ENCODE measurements at regions of chr3 and their contacts with region 1.

Region 1: DNA sequence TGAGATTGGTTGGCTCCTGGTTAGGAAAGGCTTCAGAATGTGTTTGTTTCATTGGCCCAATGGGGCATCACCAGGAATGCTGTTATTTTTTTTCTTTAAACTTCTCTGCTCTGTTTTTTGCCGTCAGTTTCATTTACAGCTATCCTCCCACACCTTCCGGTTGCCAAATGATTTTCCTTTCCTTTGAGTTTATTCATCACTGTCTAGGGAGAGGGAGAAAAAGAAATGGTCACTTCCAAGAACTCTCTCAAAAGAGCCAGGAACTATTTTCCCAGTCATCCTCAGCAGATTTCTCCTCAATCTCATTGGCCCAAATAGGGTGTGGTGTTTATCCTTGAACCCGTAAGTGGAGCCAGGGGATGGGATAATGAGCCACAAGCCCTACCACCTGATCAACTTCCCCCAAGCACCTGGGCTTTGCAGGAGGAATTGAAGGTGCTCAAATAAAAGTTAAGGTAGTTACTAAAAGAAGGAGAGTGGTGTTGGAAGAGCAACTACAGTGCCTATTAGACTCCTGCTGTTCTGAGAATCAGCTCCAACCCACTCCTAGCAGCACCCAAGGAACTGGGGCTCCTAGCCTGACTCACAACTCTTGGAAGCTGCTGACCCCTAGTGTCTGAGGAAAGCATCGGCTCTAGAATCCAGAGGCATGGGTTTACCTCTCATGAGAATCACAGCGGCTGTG is 183.8 kb upstream of the IL12A start:
- DNase-seq: no peak
- ATAC-seq: no peak
- H3K4me3 Mint-ChIP-seq: no peak overlapping the region
- H3K27ac Mint-ChIP-seq: no peak overlapping the region
- H3K4me1 Mint-ChIP-seq: no peaks in the 10 kb centered on the region
- H3K27me3 Mint-ChIP-seq: no peaks in the 10 kb centered on the region
- CTCF ChIP-seq: no peak

Region 2: GRCh38 chr3:158845765-158846350 is 959.0 kb before region 1 on chr3:
- CTCF ChIA-PET with region 1: no interaction called
- POLR2A ChIA-PET with region 1: no interaction called
- intact Hi-C with region 1: loop called (anchors 2 kb)
- DNase-seq: no peak
- ATAC-seq: peak; percentile 34
- H3K4me3 Mint-ChIP-seq: no peak overlapping the region
- H3K27ac Mint-ChIP-seq: no peak overlapping the region
- H3K4me1 Mint-ChIP-seq: peaks cover 3% of the 10 kb centered on the region
- H3K27me3 Mint-ChIP-seq: no peaks in the 10 kb centered on the region
- CTCF ChIP-seq: peak; percentile 29

Region 3: GRCh38 chr3:159130108-159130507 is 674.8 kb before region 1 on chr3:
- CTCF ChIA-PET with region 1: no interaction called
- POLR2A ChIA-PET with region 1: no interaction called
- intact Hi-C with region 1: loop called (anchors 10 kb)
- DNase-seq: no peak
- ATAC-seq: no peak
- H3K4me3 Mint-ChIP-seq: no peak overlapping the region
- H3K27ac Mint-ChIP-seq: no peak overlapping the region
- H3K4me1 Mint-ChIP-seq: no peaks in the 10 kb centered on the region
- H3K27me3 Mint-ChIP-seq: peaks cover 4% of the 10 kb centered on the region
- CTCF ChIP-seq: no peak

Region 4: DNA sequence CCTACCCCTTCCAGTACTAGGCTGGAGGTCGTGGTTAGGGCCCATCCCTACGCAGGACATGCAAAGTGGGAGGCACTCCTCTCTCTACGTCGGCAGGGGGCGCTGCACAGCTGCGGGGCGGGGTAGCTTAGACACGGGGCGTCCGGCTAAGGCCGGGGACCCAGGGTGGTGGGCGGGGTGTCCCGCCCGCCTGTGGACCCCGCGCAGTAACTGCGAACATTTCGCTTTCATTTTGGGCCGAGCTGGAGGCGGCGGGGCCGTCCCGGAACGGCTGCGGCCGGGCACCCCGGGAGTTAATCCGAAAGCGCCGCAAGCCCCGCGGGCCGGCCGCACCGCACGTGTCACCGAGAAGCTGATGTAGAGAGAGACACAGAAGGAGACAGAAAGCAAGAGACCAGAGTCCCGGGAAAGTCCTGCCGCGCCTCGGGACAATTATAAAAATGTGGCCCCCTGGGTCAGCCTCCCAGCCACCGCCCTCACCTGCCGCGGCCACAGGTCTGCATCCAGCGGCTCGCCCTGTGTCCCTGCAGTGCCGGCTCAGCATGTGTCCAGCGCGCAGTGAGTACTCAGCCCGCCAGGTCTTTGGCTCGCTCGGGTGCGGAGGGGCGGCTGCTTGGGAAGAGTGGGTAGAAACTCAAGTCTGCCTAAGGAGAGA is 183.9 kb after region 1 on chr3 and contains the start of gene IL12A:
- CTCF ChIA-PET with region 1: no interaction called
- POLR2A ChIA-PET with region 1: no interaction called
- intact Hi-C with region 1: no loop called
- DNase-seq: peak; percentile 90
- ATAC-seq: peak; percentile 94
- H3K4me3 Mint-ChIP-seq: peak within 1 kb of the TSS; percentile 90
- H3K27ac Mint-ChIP-seq: peak within 1 kb of the TSS; percentile 80
- H3K4me1 Mint-ChIP-seq: peaks cover 53% of the 10 kb centered on the region
- H3K27me3 Mint-ChIP-seq: no peaks in the 10 kb centered on the region
- CTCF ChIP-seq: peak; percentile 90
- total RNA-seq, gene IL12A: 7.0 and 7.8 TPM in 2 replicates

Measured in activated B cell treated with CpG ODN at 0.5 μM for 24 hours (primary cell).